Endothelial cell of umbilical vein (primary cell): ENCODE measurements at regions of chr15 and their contacts with region 1.

Region 1: GRCh38 chr15:66497502-66498455 is at the start of gene SNAPC5:
- DNase-seq: peak; percentile 96
- H3K4me3 ChIP-seq: peak within 1 kb of the TSS; percentile 41 to 62 (median 62)
- H3K27ac ChIP-seq: peak within 1 kb of the TSS; percentile 41
- H3K4me1 ChIP-seq: peaks cover 20% of the 10 kb centered on the region
- H3K27me3 ChIP-seq: no peaks in the 10 kb centered on the region
- CTCF ChIP-seq: peak; percentile 97 to 99
- POLR2A ChIP-seq: peak; percentile 78
- total RNA-seq, gene SNAPC5: 13.6 and 17.4 TPM in 2 replicates

Region 2: DNA sequence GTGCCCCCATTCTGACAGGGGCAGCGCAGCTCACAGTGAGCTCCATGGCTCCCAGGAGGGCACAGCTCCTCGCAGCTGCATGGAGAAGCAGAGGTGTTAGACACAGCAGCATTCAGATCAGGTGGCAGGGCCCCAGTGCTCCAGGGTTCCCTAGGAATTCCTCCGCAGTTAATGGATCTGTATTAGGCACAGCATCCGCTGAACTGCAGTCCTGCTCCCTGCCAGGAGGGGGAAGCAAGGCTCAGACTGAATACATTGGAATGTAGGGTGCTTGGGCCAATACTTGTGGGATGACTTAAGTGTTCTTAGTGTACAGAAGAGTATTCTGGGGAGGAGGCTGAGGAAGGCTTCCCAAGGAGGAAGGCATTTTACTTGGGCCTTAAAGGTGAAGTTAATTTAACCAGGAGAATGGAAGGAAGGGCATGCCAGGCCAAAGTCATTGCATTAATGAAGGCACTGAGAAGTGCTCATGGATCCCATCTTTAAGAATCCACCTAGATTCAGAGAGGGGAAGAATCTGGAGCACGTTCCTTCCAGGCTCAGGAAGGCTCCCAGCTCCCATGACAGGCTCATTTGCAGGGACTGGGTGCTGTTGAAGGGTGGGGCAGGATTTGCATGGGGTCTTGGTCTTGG is 516.8 kb before region 1 on chr15:
- CTCF ChIA-PET with region 1: interaction called, 6 read pairs
- POLR2A ChIA-PET with region 1: no interaction called
- dilution Hi-C with region 1: no loop called
- intact Hi-C with region 1: loop called (anchors 10 kb)
- DNase-seq: peak; percentile 52
- H3K4me3 ChIP-seq: no peak overlapping the region
- H3K27ac ChIP-seq: no peak overlapping the region
- H3K4me1 ChIP-seq: no peaks in the 10 kb centered on the region
- H3K27me3 ChIP-seq: peaks cover 23 to 30% of the 10 kb centered on the region in 2 experiments
- CTCF ChIP-seq: peak; percentile 58 to 68
- POLR2A ChIP-seq: no peak

Region 3: DNA sequence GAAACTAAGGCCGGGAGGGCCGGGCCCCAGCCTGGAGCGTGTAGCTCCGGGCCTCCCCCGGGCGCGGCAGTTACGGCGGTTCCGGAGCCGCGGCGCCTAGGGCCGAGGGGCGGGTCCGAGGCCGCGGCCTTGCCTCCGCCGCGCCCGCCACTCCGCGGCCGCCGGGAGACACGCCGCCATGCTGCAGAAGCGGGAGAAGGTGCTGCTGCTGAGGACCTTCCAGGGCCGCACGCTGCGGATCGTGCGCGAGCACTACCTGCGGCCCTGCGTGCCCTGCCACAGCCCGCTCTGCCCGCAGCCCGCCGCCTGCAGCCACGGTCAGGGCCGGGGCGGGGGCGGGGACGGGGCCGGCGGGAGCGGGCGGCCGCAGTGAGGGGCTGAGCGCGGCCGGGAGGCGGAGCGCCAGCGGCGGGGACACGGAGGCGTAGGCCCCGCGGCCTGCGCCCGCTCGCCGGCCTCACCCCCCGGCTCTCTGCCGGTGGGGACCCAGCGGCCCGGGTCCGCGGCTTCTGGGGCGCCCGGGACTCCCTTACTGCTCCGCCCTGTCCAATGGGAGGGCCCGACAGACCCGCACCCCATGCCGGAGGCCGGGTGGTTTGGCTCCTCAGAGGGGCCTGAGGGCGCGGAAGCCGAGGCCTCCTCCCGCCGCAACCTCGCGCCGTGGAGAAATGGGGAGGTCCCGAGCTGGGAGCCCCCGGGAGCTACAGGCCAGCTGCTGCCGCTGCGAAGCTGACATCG is 204.2 kb before region 1 on chr15 and contains the start of gene DIS3L:
- CTCF ChIA-PET with region 1: interaction called, 36 read pairs
- POLR2A ChIA-PET with region 1: no interaction called
- dilution Hi-C with region 1: no loop called
- intact Hi-C with region 1: loop called (anchors 2 kb)
- DNase-seq: peak; percentile 53
- H3K4me3 ChIP-seq: peak within 1 kb of the TSS; percentile 69 to 78 (median 76)
- H3K27ac ChIP-seq: peak within 1 kb of the TSS; percentile 71
- H3K4me1 ChIP-seq: peaks cover 30% of the 10 kb centered on the region
- H3K27me3 ChIP-seq: no peaks in the 10 kb centered on the region
- CTCF ChIP-seq: no peak
- POLR2A ChIP-seq: peak; percentile 59
- total RNA-seq, gene DIS3L: 21.6 and 27.9 TPM in 2 replicates

Region 4: GRCh38 chr15:66386204-66387123 is 111.3 kb before region 1 on chr15 and contains the start of gene MAP2K1:
- CTCF ChIA-PET with region 1: interaction called, 100 read pairs
- POLR2A ChIA-PET with region 1: interaction called, 19 read pairs
- dilution Hi-C with region 1: no loop called
- intact Hi-C with region 1: loop called (anchors 1 kb)
- DNase-seq: peak; percentile 98
- H3K4me3 ChIP-seq: peak within 1 kb of the TSS; percentile 78 to 93 (median 81)
- H3K27ac ChIP-seq: peak within 1 kb of the TSS; percentile 83
- H3K4me1 ChIP-seq: peaks cover 31% of the 10 kb centered on the region
- H3K27me3 ChIP-seq: no peaks in the 10 kb centered on the region
- CTCF ChIP-seq: peak; percentile 66 to 94
- POLR2A ChIP-seq: peak; percentile 46
- total RNA-seq, gene MAP2K1: 45.1 and 45.5 TPM in 2 replicates

Region 5: DNA sequence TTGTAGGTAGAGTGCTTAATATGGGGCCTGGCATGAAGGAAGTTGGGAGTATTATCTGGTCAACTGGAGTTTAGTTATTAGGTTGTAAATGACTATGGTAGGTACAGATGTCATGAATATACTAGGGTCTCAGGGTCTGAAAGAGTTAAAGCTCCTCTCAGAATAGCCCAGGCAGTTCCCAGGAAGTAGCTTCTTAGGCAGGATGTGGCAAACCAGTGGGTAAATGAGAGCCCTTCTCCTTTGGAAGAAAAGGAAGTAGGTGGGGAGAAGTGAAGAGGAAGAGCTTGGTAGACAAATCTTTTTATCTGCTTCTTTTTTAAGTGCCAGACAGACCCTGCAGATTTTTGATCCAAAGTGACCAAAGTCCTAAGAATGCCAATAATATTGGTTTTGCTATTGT is 86.6 kb before region 1 on chr15:
- CTCF ChIA-PET with region 1: interaction called, 35 read pairs
- POLR2A ChIA-PET with region 1: no interaction called
- dilution Hi-C with region 1: no loop called
- intact Hi-C with region 1: no loop called
- DNase-seq: no peak
- H3K4me3 ChIP-seq: no peak overlapping the region
- H3K27ac ChIP-seq: no peak overlapping the region
- H3K4me1 ChIP-seq: peaks cover 15% of the 10 kb centered on the region
- H3K27me3 ChIP-seq: no peaks in the 10 kb centered on the region
- CTCF ChIP-seq: no peak
- POLR2A ChIP-seq: no peak